Psoas muscle (tissue), 8 donors: ENCODE measurements at regions of chr4 and their contacts with region 1.

Region 1: GRCh38 chr4:107196312-107196711 is 160.2 kb upstream of the DKK2 start:
- DNase-seq: no peak
- ATAC-seq: no peak
- H3K4me3 ChIP-seq: no peak overlapping the region
- H3K27ac ChIP-seq: no peak overlapping the region
- H3K4me1 ChIP-seq: no peaks in the 10 kb centered on the region
- H3K27me3 ChIP-seq: no peaks in the 10 kb centered on the region
- CTCF ChIP-seq: no peak

Region 2: GRCh38 chr4:107133965-107134653 is 62.2 kb before region 1 on chr4:
- intact Hi-C with region 1: loop called in 1 of 2 experiments (anchors 2 kb)
- DNase-seq: no peak
- ATAC-seq: no peak
- H3K4me3 ChIP-seq: no peak overlapping the region
- H3K27ac ChIP-seq: no peak overlapping the region
- H3K4me1 ChIP-seq: no peaks in the 10 kb centered on the region
- H3K27me3 ChIP-seq: no peaks in the 10 kb centered on the region
- CTCF ChIP-seq: no peak